HEK293T (cell line): ENCODE measurements at regions of chr11 and their contacts with region 1.

Region 1: GRCh38 chr11:57800444-57801182 is 39.0 kb downstream of the CTNND1 start:
- DNase-seq: peak; percentile 65

Region 2: DNA sequence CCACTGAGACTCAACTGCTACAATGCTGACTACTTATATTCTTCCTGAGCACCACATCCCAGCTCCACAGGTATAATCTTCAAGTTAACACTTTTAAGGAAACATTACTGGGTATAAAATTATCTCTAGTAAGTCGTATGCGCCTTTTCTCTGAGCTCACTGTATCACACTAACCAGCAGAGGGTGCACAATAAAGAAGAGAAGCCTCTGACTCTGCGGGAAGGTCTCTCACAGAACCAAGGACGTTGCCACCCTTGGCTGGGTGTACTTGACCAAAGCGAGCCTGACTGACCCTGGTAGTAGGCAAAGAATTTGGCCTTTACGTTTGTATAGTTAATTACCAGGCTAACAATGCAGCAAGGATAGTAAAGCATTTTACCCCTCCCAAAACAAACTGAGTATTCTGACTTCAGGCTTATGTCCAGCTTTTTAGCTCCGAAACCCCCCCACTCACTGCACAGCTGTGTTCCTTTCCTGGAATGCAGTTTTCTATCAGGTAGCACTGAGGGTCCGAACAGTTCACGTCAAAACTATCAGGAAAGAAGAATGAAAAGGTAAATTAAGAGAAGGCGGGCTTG is 48.8 kb before region 1 on chr11 and contains the start of gene BTBD18:
- CTCF ChIA-PET with region 1: interaction called, 33 read pairs
- POLR2A ChIA-PET with region 1: interaction called, 3 read pairs
- DNase-seq: peak; percentile 46

Region 3: GRCh38 chr11:57761301-57762234 is 39.0 kb before region 1 on chr11 and contains the start of gene CTNND1:
- CTCF ChIA-PET with region 1: interaction called, 15 read pairs
- POLR2A ChIA-PET with region 1: interaction called, 5 read pairs
- DNase-seq: peak; percentile 91

Region 4: GRCh38 chr11:57778318-57779037 is 22.1 kb before region 1 on chr11:
- CTCF ChIA-PET with region 1: interaction called, 10 read pairs
- POLR2A ChIA-PET with region 1: no interaction called
- DNase-seq: peak; percentile 72